ENCODE measurements at regions of chr2 and their contacts with region 1.

Region 1: GRCh38 chr2:156334496-156335478 is 2.3 kb upstream of the NR4A2 start:
- DNase-seq: peak; percentile 79
- H3K4me3 Mint-ChIP-seq: peak overlapping the region; percentile 91
- H3K27ac Mint-ChIP-seq: peak overlapping the region; percentile 93
- H3K4me1 Mint-ChIP-seq: peaks cover 61% of the 10 kb centered on the region
- H3K27me3 Mint-ChIP-seq: peaks cover 41% of the 10 kb centered on the region

Region 2: GRCh38 chr2:156147594-156148330 is 187.0 kb before region 1 on chr2:
- CTCF ChIA-PET with region 1: no interaction called
- DNase-seq: no peak
- H3K4me3 Mint-ChIP-seq: no peak overlapping the region
- H3K27ac Mint-ChIP-seq: no peak overlapping the region
- H3K4me1 Mint-ChIP-seq: no peaks in the 10 kb centered on the region
- H3K27me3 Mint-ChIP-seq: no peaks in the 10 kb centered on the region

Region 3: GRCh38 chr2:156349605-156350004 is 14.8 kb after region 1 on chr2:
- CTCF ChIA-PET with region 1: no interaction called
- DNase-seq: no peak
- H3K4me3 Mint-ChIP-seq: no peak overlapping the region
- H3K27ac Mint-ChIP-seq: no peak overlapping the region
- H3K4me1 Mint-ChIP-seq: peaks cover 6% of the 10 kb centered on the region
- H3K27me3 Mint-ChIP-seq: no peaks in the 10 kb centered on the region

Region 4: DNA sequence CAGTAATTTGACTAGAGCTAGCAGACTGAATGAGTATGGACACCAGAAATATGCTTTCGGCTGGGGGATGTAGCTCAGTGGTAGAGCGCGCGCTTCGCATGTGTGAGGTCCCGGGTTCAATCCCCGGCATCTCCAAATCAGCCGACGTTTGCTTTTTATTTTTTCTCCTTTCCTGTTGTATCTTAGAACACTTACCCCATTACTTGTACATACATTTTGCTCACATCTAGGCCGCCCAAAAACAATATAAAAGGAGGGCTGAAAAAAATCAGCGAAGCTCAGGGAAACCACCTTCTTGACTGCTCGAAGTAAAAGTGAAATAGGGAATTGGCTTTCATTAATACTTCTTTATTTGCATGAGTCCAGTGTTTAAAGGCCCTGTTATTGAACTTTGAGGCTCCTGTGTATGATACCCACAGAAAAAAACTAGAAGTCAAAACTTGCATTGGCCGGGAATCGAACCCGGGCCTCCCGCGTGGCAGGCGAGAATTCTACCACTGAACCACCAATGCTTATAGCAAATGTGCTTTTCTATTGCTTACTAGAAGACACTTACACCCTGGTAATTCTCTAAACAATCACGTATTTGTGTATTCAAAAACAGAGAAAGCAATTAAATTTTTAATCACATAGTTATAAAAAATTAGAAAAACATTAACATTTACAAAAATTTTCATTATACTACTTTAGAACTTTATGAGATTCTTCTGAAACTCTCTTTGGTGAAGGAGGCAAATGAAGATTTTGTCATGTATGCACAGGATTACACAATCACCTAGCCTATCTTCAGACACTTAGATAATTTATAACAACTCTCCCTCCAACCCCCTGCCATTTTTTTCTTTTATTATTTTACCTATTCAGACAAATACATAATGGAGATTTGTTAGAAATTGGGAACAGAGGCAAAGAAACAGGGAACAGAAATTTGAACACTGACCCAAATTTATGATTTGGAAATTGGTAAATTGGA is 66.2 kb after region 1 on chr2:
- CTCF ChIA-PET with region 1: interaction called, 15 read pairs
- DNase-seq: peak; percentile 80
- H3K4me3 Mint-ChIP-seq: peak overlapping the region; percentile 77
- H3K27ac Mint-ChIP-seq: peak overlapping the region; percentile 91
- H3K4me1 Mint-ChIP-seq: peaks cover 34% of the 10 kb centered on the region
- H3K27me3 Mint-ChIP-seq: peaks cover 9% of the 10 kb centered on the region

Region 5: DNA sequence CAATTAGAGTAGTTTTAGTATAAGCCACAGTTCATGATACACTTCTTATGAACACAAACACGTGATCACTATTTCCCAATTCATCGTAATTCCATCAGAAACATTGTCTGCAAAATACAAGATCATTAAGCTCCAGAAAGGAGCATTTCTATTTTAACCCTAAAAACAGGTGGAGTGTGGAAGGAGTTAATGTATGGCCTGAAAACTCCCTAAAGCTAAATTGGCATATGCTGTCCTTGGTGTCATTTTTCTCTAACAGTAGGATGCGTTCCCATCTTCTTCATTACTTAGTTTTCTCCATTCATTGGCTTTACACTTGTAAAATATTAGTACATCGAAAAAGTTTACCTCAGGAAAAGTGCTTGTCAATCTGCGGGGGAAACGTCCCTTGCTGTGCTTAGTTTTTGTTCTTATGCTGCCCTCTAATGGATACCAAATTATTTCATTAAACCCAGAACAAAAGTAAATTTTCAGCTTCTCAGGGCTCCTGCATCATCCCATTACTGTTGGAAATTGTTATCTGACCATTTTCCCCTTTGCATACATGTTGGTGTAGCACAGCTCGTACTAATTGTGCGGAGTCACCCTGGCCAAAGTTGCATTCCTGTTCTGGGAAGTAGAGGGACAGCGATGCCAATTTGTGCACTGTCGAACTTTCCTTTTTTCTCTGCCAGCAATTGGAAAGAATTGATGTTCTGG is 254.7 kb after region 1 on chr2:
- CTCF ChIA-PET with region 1: interaction called, 35 read pairs
- DNase-seq: peak; percentile 31
- H3K4me3 Mint-ChIP-seq: no peak overlapping the region
- H3K27ac Mint-ChIP-seq: no peak overlapping the region
- H3K4me1 Mint-ChIP-seq: peaks cover 2% of the 10 kb centered on the region
- H3K27me3 Mint-ChIP-seq: no peaks in the 10 kb centered on the region

Region 6: DNA sequence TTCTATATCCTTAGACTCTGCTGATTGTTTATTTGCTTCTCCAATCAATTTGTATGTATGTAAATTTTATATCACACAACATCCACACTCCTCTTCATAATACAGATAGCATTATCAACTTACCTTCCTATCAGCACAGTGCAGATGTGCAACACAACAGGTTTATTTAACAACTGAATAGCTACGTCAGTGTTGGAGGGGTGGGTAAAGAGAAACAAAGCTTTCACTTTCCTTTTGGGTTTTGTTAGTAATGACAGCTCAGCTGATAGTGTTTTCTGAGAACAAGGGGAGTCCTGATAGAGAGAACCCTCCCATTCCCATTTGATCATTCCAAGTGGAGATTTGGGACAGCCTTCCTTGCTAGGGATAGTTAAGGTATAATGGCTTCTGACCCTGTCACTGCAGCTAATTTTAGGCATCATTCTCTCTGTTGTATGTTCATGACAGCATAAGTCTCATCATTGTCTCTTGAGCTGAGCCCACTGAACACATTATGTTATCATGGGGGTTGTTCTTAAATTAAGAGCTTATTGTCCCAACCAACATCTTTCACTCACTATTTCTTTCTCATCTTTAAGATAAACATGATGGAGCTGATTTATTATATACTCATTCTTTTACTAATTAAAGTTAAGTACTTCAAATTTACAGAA is 329.1 kb after region 1 on chr2:
- CTCF ChIA-PET with region 1: no interaction called
- DNase-seq: no peak
- H3K4me3 Mint-ChIP-seq: no peak overlapping the region
- H3K27ac Mint-ChIP-seq: no peak overlapping the region
- H3K4me1 Mint-ChIP-seq: no peaks in the 10 kb centered on the region
- H3K27me3 Mint-ChIP-seq: no peaks in the 10 kb centered on the region